ENCODE measurements at regions of chr3 and their contacts with region 1.

Region 1: DNA sequence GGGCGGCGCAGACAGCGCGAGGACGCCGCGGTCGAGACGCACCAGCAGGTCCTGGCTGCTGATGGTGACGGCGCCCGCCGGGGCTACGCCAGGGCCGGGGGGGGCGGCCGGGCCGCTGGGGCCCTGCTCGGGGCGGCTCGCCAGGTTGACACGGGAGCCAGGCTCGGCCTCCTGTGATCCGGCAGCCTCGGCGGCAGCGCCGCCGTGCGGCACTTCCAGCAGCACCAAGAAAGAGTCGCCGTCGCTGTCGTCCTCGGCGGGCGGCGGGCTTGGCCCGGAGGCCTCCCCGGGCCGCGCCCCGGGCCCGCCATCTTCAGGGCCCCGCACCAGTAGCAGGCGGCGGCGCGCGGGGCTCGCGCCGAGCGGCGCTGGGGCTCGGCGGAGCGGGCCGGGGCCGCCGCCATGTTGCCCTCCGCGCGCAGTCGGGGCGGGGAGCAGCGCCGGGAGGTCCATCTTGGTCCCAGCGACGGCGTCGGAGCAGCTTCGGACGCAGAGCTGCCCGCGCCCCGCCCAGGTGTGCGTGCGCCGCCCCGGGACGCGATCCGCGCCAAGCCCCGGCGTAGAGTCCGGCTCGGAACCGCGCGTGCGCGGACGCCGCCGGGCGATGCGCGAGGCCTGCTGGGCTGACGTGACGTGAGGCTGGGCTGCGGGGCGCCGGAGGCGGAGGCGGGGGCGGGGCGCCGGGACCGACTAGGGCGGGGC is at the start of gene ZXDC:
- DNase-seq: peak; percentile 95
- H3K4me3 ChIP-seq: peak within 1 kb of the TSS; percentile 86
- H3K27ac ChIP-seq: peak within 1 kb of the TSS; percentile 87
- H3K4me1 ChIP-seq: peaks cover 26% of the 10 kb centered on the region
- H3K27me3 ChIP-seq: no peaks in the 10 kb centered on the region
- CTCF ChIP-seq: peak; percentile 35; the same call in 1 of the 2 replicates
- total RNA-seq, gene ZXDC: 61.1 and 63.2 TPM in 2 replicates

Region 2: GRCh38 chr3:125916376-125916978 is 559.1 kb before region 1 on chr3:
- CTCF ChIA-PET with region 1: no interaction called
- POLR2A ChIA-PET with region 1: no interaction called
- intact Hi-C with region 1: loop called (anchors 10 kb)
- DNase-seq: peak; percentile 97
- H3K4me3 ChIP-seq: peak overlapping the region; percentile 65
- H3K27ac ChIP-seq: peak overlapping the region; percentile 67
- H3K4me1 ChIP-seq: peaks cover 4% of the 10 kb centered on the region
- H3K27me3 ChIP-seq: no peaks in the 10 kb centered on the region
- CTCF ChIP-seq: peak; percentile 58

Region 3: DNA sequence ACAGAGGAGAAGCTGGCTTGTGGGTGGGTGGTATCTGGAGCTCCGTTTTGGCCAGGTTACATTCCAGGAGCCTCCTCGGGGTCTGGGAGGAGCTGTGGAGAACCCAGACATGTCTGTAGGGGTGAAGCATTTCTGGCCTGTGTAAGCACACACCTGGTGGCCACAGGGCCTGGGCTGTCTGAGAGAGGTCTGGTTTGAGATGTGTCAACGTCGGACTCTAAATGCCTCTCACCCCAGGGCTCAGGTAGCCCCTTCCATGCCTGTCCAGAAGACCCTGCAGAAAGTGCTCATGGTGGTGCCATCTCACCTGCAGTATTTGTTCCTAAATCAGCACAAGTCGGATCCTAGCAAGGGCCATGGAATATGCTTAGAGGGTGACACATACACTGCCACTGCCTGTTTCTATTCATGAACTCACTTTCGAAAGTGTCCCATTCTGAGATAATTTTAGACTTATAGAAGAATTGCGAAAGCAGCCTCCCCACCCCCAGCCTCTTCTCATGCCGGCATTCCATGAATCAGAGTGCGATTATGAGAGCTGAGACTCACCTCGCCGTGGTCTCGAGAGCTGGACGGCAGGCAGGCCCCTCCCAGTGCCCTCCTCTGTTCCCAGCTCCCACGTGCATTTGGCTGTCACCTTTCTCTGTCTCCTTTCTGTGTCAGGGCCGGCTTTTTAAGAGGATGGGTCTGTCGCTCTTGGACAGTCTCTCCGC is 182.0 kb before region 1 on chr3:
- CTCF ChIA-PET with region 1: no interaction called
- POLR2A ChIA-PET with region 1: no interaction called
- intact Hi-C with region 1: loop called (anchors 5 kb)
- DNase-seq: peak; percentile 62
- H3K4me3 ChIP-seq: no peak overlapping the region
- H3K27ac ChIP-seq: peak overlapping the region; percentile 99
- H3K4me1 ChIP-seq: peaks cover 51% of the 10 kb centered on the region
- H3K27me3 ChIP-seq: no peaks in the 10 kb centered on the region
- CTCF ChIP-seq: no peak

Region 4: DNA sequence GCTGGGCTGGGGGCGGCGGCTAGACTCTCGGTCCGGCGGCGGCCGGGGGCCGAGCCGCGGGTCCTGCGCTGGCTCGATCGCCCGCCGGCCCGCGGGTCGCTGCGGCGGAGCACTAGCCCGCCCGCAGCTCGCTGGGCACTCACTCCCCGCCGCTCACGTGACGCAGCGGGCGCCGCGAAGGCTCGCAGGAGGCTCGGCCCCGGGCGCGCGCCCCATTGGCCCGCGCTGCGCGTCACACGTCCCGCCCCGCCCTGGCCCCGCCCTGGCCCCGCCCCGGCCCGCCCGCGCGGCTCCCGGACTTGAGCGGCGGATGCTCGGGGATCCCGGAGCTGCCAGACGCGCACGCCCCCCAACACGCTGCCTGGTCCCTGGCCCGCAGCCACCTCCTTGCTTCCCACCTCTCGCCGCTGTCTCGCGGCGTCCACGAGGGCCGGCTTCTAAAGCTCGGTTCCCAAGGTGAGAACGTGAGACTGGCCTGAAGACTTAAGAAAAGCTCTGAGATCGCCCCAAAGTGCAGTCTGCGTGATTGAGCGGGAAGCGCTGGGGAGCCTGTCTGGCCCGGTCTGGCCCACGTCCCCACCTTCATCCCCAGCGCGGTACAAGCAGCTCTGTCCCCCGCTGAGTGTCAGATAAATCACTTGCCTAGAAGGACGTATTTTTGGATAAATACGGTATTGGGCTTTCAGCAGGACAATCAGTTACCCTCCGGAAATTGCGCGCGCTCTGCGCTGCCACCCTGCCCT is 118.1 kb before region 1 on chr3 and contains the start of gene KLF15:
- CTCF ChIA-PET with region 1: no interaction called
- POLR2A ChIA-PET with region 1: no interaction called
- intact Hi-C with region 1: loop called (anchors 5 kb)
- DNase-seq: peak; percentile 91
- H3K4me3 ChIP-seq: peak within 1 kb of the TSS; percentile 77
- H3K27ac ChIP-seq: peak within 1 kb of the TSS; percentile 83
- H3K4me1 ChIP-seq: peaks cover 28% of the 10 kb centered on the region
- H3K27me3 ChIP-seq: no peaks in the 10 kb centered on the region
- CTCF ChIP-seq: no peak
- total RNA-seq, gene KLF15: 32.1 and 32.6 TPM in 2 replicates

Region 5: DNA sequence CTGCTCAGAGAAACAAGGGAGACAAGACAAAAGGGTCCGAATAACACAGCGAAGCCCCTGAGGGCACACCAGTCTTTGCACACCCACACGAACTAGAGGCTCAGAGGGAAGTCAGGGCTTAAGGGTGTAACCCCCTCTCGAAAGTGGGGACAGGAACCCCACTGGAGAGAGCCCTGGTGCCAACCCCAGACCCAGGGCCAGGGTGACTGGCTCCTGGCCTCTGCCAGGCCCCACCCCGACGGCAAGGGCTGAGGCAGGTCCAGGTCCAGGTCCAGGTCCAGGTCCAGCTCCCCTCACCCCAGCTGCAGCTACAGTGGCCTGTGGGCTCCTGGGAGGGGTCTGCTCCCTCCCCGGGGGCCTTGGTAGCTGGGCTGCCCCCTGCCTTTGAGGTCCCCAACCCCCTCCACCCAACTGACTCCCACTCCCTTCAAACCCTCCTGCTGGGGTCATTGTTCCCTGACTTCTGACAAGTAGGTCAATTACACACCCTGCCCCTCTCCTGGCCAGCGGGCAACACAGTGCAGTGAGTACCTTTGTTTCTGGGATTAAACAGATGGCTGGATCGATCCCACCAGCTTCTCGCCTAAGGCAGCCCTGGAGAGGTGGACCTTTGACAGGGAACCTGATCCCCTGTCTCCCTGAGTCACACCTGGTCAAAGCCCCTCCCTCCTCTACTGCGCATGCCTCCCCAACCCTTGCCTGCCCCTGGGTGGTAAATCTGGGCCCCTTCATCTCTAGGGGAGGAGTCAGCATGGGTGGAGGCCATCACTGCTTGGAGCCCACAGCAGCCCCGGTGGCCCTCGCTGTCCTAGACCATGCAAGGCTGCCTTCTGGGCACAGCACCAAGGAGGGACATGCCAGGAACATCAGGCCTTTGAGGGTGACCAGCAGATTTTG is 707.2 kb after region 1 on chr3:
- CTCF ChIA-PET with region 1: no interaction called
- POLR2A ChIA-PET with region 1: no interaction called
- intact Hi-C with region 1: no loop called
- DNase-seq: no peak
- H3K4me3 ChIP-seq: no peak overlapping the region
- H3K27ac ChIP-seq: no peak overlapping the region
- H3K4me1 ChIP-seq: no peaks in the 10 kb centered on the region
- H3K27me3 ChIP-seq: no peaks in the 10 kb centered on the region
- CTCF ChIP-seq: no peak

Measured in A673 (cell line).